Mammary epithelial cell (primary cell): ENCODE measurements at regions of chr9 and their contacts with region 1.

Region 1: GRCh38 chr9:18009902-18010301 is 431.0 kb downstream of the SH3GL2 start:
- DNase-seq: no peak
- H3K4me3 ChIP-seq: no peak overlapping the region
- H3K27ac ChIP-seq: no peak overlapping the region
- H3K4me1 ChIP-seq: no peaks in the 10 kb centered on the region
- H3K27me3 ChIP-seq: peaks cover 2% of the 10 kb centered on the region
- CTCF ChIP-seq: no peak

Region 2: GRCh38 chr9:18023332-18023731 is 13.4 kb after region 1 on chr9:
- CTCF ChIA-PET with region 1: no interaction called
- dilution Hi-C with region 1: no loop called
- in situ Hi-C with region 1: no loop called
- intact Hi-C with region 1: loop called (anchors 1 kb)
- DNase-seq: no peak
- H3K4me3 ChIP-seq: no peak overlapping the region
- H3K27ac ChIP-seq: no peak overlapping the region
- H3K4me1 ChIP-seq: no peaks in the 10 kb centered on the region
- H3K27me3 ChIP-seq: no peaks in the 10 kb centered on the region
- CTCF ChIP-seq: no peak